Left cardiac atrium (tissue), 4 donors: ENCODE measurements at regions of chr19 and their contacts with region 1.

Region 1: GRCh38 chr19:33368074-33368864 is 5.2 kb upstream of the CEBPG start:
- DNase-seq: no peak
- ATAC-seq: no peak

Region 2: GRCh38 chr19:33290956-33291622 is 77.2 kb before region 1 on chr19:
- intact Hi-C with region 1: no loop called
- DNase-seq: peak; percentile 3
- ATAC-seq: no peak

Region 3: GRCh38 chr19:33302175-33302973 is 65.9 kb before region 1 on chr19 and contains the start of gene CEBPA:
- intact Hi-C with region 1: loop called in 1 of 2 experiments (anchors 10 kb)
- DNase-seq: peak; percentile 84
- ATAC-seq: peak; percentile 88 to 91
- total RNA-seq, gene CEBPA: 21.0 to 41.8 TPM

Region 4: DNA sequence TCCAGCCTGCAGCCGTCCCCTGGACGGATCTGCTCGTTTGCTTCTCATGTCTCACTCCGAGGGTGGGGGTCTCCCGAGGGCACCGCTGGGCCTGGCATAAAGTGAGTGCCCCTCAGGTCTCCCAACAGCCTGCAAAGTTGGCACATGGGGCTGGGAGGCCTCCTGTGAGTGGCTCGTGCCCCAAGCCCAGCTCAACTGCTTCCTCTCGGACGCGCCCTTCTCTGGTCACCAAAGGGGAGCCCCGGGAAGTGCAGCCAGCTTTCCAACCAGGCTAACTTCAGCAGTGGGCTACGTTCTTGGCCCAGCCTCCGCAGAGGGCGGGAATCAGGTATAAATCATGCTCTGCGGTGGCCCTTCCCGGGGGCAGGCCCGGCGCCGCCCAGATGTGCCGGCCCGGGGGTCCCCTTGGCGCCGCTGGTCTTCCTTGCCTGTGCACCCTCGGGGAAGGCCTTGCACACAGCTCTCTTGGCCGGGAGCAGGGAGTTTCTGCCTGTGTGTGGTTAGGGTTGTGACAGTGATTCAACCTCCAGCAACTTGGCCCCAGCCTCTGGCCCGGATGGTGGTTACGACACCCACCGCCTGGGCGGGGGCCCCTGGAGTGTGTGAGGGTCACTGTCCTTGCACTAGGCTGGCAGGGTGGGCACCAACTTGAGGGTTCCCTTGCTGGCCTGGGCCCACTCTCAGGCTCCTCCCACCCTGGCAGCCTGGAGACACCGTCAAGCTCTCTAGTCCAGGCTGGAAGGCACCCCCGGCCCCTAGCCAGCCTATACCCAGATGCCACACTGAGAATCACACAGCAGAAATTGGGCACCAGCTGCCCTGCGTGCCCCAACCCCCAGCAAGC is 26.0 kb after region 1 on chr19:
- intact Hi-C with region 1: no loop called
- DNase-seq: peak; percentile 79
- ATAC-seq: peak; percentile 32 to 39